ENCODE measurements at regions of chr19 and their contacts with region 1.

Region 1: DNA sequence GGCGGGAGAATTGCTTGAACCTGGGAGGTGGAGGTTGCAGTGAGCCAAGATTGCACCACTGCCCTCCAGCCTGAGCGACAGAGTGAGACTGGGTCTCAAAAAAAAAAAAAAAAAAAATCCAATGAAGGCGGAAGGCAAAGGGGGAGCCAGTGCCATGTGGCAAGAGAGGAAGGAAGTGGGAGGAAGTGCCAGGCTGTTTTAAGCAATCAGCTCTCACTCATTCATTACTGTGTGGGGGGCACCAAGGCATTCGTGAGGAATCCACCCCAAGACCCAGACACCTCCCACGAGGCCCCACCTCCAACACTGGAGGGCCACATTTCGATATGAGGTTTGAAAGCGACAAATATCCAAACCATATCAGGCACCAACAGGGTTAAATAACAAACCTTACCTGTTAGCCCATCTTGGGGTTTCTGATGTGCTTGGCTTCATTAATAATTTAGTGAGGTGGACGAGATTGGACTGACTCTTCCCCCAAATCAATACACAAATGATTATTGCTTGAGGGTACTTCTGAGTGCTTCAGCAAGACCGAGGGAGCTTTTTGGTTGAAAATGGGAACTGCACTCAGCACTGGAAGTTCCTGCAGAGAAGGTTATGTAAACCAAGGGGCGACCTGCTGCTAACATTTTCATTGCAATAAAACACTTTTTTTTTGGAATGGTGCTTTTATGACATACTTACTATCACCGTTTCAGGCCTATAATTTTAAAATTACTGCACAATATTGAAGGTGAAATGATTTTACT is 7.5 kb upstream of the LRP3 start:
- DNase-seq: no peak
- ATAC-seq: no peak
- H3K4me3 ChIP-seq: no peak overlapping the region
- H3K27ac ChIP-seq: no peak overlapping the region
- H3K4me1 ChIP-seq: no peaks in the 10 kb centered on the region
- CTCF ChIP-seq: no peak
- EP300 ChIP-seq: no peak
- POLR2A ChIP-seq: no peak
- RAD21 ChIP-seq: no peak

Region 2: GRCh38 chr19:33071887-33072286 is 114.7 kb before region 1 on chr19:
- CTCF ChIA-PET with region 1: no interaction called
- POLR2A ChIA-PET with region 1: no interaction called
- DNase-seq: peak in 1 of 2 experiments; percentile 87
- ATAC-seq: peak in 1 of 2 experiments; percentile 55; a peak in 4 of 6 replicates
- H3K4me3 ChIP-seq: no peak overlapping the region
- H3K27ac ChIP-seq: peak overlapping the region; percentile 71 to 79
- H3K4me1 ChIP-seq: peaks cover 48% of the 10 kb centered on the region
- CTCF ChIP-seq: no peak
- EP300 ChIP-seq: no peak
- POLR2A ChIP-seq: no peak
- RAD21 ChIP-seq: no peak

Region 3: GRCh38 chr19:33104520-33104919 is 82.1 kb before region 1 on chr19:
- CTCF ChIA-PET with region 1: interaction called, 15 read pairs
- POLR2A ChIA-PET with region 1: no interaction called
- DNase-seq: no peak
- ATAC-seq: no peak
- H3K4me3 ChIP-seq: no peak overlapping the region
- H3K27ac ChIP-seq: no peak overlapping the region
- H3K4me1 ChIP-seq: peaks cover 17% of the 10 kb centered on the region
- CTCF ChIP-seq: no peak
- EP300 ChIP-seq: no peak
- POLR2A ChIP-seq: no peak
- RAD21 ChIP-seq: no peak

Region 4: GRCh38 chr19:33143897-33144405 is 42.7 kb before region 1 on chr19:
- CTCF ChIA-PET with region 1: interaction called, 162 read pairs
- POLR2A ChIA-PET with region 1: no interaction called
- DNase-seq: peak; percentile 83 to 98
- ATAC-seq: peak; percentile 91 to 97
- H3K4me3 ChIP-seq: no peak overlapping the region
- H3K27ac ChIP-seq: peak overlapping the region; percentile 14 to 62; a peak in 4 of 6 replicates
- H3K4me1 ChIP-seq: no peaks in the 10 kb centered on the region
- CTCF ChIP-seq: peak; percentile 99
- EP300 ChIP-seq: no peak
- POLR2A ChIP-seq: no peak
- RAD21 ChIP-seq: peak; percentile 97

Region 5: GRCh38 chr19:33156334-33156733 is 30.3 kb before region 1 on chr19:
- CTCF ChIA-PET with region 1: interaction called, 162 read pairs
- POLR2A ChIA-PET with region 1: no interaction called
- DNase-seq: no peak
- ATAC-seq: peak in 1 of 2 experiments; percentile 26; a peak in 1 of 6 replicates
- H3K4me3 ChIP-seq: no peak overlapping the region
- H3K27ac ChIP-seq: no peak overlapping the region
- H3K4me1 ChIP-seq: peaks cover 7% of the 10 kb centered on the region; the same call in 2 of the 3 replicates
- CTCF ChIP-seq: no peak
- EP300 ChIP-seq: no peak
- POLR2A ChIP-seq: no peak
- RAD21 ChIP-seq: no peak

Region 6: DNA sequence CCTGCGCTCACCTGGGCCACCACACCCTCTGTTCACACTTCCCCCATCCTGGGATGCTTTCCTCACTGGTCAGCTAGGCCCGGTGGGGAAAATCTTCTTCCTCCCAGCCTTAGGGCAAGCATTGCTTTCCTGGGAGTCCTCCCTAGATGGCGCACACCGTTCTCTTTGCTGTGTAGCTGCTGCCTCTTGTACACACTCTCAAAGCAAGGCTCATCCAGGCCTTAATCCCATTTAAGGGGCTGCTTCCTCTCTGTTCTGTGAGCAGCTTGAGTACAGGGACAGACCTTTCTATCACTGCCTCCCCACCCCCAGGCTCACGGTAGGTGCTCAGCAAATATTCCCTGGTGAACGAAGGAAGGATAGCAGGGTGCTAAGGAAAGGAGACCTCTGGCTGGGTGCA is 28.0 kb after region 1 on chr19:
- CTCF ChIA-PET with region 1: interaction called, 44 read pairs
- POLR2A ChIA-PET with region 1: no interaction called
- DNase-seq: peak; percentile 66 to 72
- ATAC-seq: peak; percentile 48 to 76; a peak in 5 of 6 replicates
- H3K4me3 ChIP-seq: no peak overlapping the region
- H3K27ac ChIP-seq: no peak overlapping the region
- H3K4me1 ChIP-seq: no peaks in the 10 kb centered on the region
- CTCF ChIP-seq: peak; percentile 47
- EP300 ChIP-seq: no peak
- POLR2A ChIP-seq: no peak
- RAD21 ChIP-seq: peak; percentile 25 to 48; a peak in 3 of 5 replicates

Region 7: GRCh38 chr19:33226550-33227241 is 40.1 kb after region 1 on chr19:
- CTCF ChIA-PET with region 1: interaction called, 25 read pairs
- POLR2A ChIA-PET with region 1: no interaction called
- DNase-seq: peak; percentile 63 to 67
- ATAC-seq: peak; percentile 32 to 69
- H3K4me3 ChIP-seq: peak overlapping the region; percentile 37
- H3K27ac ChIP-seq: peak overlapping the region; percentile 12 to 56; a peak in 3 of 6 replicates
- H3K4me1 ChIP-seq: peaks cover 16% of the 10 kb centered on the region
- CTCF ChIP-seq: no peak
- EP300 ChIP-seq: no peak
- POLR2A ChIP-seq: no peak
- RAD21 ChIP-seq: no peak

Region 8: GRCh38 chr19:33416307-33417215 is 230.0 kb after region 1 on chr19:
- CTCF ChIA-PET with region 1: interaction called, 12 read pairs
- POLR2A ChIA-PET with region 1: no interaction called
- DNase-seq: peak; percentile 84 to 99
- ATAC-seq: peak; percentile 64 to 92
- H3K4me3 ChIP-seq: no peak overlapping the region
- H3K27ac ChIP-seq: no peak overlapping the region
- H3K4me1 ChIP-seq: no peaks in the 10 kb centered on the region
- CTCF ChIP-seq: peak; percentile 98
- EP300 ChIP-seq: no peak
- POLR2A ChIP-seq: no peak
- RAD21 ChIP-seq: peak; percentile 85 to 91